Natural killer cell (primary cell): ENCODE measurements at regions of chr7 and their contacts with region 1.

Region 1: GRCh38 chr7:2417981-2418481 is 14.6 kb downstream of the CHST12 start:
- DNase-seq: peak; percentile 80 to 86
- ATAC-seq: peak; percentile 69 to 89 (median 85)
- H3K4me3 ChIP-seq: no peak overlapping the region
- H3K4me3 Mint-ChIP-seq: peak overlapping the region; percentile 86
- H3K27ac ChIP-seq: peak overlapping the region; percentile 80
- H3K27ac Mint-ChIP-seq: peak overlapping the region; percentile 63 to 93
- H3K4me1 ChIP-seq: peaks cover 91% of the 10 kb centered on the region
- H3K4me1 Mint-ChIP-seq: peaks cover 60 to 63% of the 10 kb centered on the region in 2 donors
- H3K27me3 ChIP-seq: no peaks in the 10 kb centered on the region
- H3K27me3 Mint-ChIP-seq: no peaks in the 10 kb centered on the region
- CTCF ChIP-seq: no peak

Region 2: GRCh38 chr7:2360796-2361195 is 57.2 kb before region 1 on chr7:
- intact Hi-C with region 1: loop called (anchors 2 kb)
- DNase-seq: no peak
- ATAC-seq: no peak
- H3K4me3 ChIP-seq: no peak overlapping the region
- H3K4me3 Mint-ChIP-seq: no peak overlapping the region
- H3K27ac ChIP-seq: no peak overlapping the region
- H3K27ac Mint-ChIP-seq: peak overlapping the region; percentile 42 to 73
- H3K4me1 ChIP-seq: peaks cover 46% of the 10 kb centered on the region
- H3K4me1 Mint-ChIP-seq: peaks cover 62% of the 10 kb centered on the region in 2 donors
- H3K27me3 ChIP-seq: no peaks in the 10 kb centered on the region
- H3K27me3 Mint-ChIP-seq: no peaks in the 10 kb centered on the region
- CTCF ChIP-seq: no peak